ENCODE measurements at regions of chr15 and their contacts with region 1.

Region 1: GRCh38 chr15:101127506-101128076 is 124.3 kb downstream of the CHSY1 start:
- DNase-seq: peak; percentile 37
- H3K4me3 ChIP-seq: no peak overlapping the region
- H3K27ac ChIP-seq: peak overlapping the region; percentile 25
- H3K4me1 ChIP-seq: peaks cover 25% of the 10 kb centered on the region
- H3K27me3 ChIP-seq: no peaks in the 10 kb centered on the region
- CTCF ChIP-seq: no peak

Region 2: DNA sequence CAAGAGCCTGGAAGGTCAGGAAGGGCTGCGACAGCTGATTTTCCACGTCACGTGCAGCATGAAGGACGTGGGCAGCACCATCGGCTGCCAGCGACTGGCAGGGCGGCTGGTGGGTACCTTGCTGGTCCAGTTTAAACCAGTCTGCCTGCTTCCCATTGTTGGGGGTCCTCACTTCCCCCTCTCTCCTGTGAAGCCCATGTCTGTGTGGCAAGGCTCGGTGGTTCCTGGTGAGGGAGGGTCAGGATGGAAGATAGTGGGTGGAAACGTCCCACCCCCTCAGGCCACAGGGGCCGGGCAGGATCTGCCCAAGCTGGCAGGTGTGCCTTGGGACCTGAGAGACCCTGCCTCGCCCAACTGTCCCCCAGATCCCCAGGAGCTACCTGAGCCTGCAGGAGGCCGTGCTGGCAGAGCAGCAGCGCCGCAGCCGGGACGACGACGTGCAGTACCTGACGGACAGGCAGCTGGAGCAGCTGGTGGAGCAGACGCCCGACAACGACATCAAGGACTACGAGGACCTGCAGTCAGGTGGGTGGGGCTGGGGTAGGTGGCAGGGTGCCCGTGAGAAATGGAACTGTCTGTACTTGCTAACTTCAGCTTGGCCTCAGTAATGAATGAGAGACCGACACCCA is 100.2 kb before region 1 on chr15:
- CTCF ChIA-PET with region 1: no interaction called
- dilution Hi-C with region 1: loop called (anchors 5 kb)
- in situ Hi-C with region 1: no loop called
- intact Hi-C with region 1: no loop called
- DNase-seq: no peak
- H3K4me3 ChIP-seq: no peak overlapping the region
- H3K27ac ChIP-seq: no peak overlapping the region
- H3K4me1 ChIP-seq: no peaks in the 10 kb centered on the region
- H3K27me3 ChIP-seq: no peaks in the 10 kb centered on the region
- CTCF ChIP-seq: no peak

Measured in mammary epithelial cell (primary cell).